Activated T-helper 2 cell treated with anti-CD3 and anti-CD28 coated beads, Interferon-gamma antibody, Interleukin-2, Interleukin-4, amounts not matched to agents 10 μg/mL and 5 μg/mL and 100 μg/mL, durations not matched to agents 14 hours and 24 hours and 36 hours (primary cell): ENCODE measurements at regions of chr12 and their contacts with region 1.

Region 1: DNA sequence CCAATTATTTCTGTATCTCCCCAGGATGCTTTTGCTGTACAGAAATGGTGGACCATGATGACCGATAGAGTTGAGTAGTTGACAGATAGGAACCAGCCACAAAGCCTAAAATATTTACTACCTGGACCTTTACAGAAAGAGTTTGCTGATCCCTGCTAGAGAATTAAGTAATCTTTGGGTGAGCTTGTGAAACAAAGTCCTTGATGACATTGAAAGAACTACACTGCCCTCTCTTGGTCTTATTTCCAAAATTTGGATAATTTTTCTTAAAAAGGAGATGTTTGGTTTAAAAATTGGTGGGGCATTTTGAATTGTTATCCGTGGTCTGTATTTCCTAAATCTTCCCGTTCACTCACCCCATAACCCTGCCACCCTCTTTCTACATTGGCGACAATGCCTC is 13.7 kb upstream of the TCTN1 start:
- DNase-seq: no peak
- H3K4me3 Mint-ChIP-seq: no peak overlapping the region
- H3K27ac Mint-ChIP-seq: no peak overlapping the region
- H3K4me1 Mint-ChIP-seq: peaks cover 11% of the 10 kb centered on the region
- H3K27me3 Mint-ChIP-seq: no peaks in the 10 kb centered on the region

Region 2: GRCh38 chr12:110449799-110450497 is 150.3 kb before region 1 on chr12 and contains the start of gene ARPC3:
- intact Hi-C with region 1: loop called (anchors 1 kb)
- DNase-seq: peak; percentile 95
- H3K4me3 Mint-ChIP-seq: peak within 1 kb of the TSS; percentile 100
- H3K27ac Mint-ChIP-seq: peak within 1 kb of the TSS; percentile 99
- H3K4me1 Mint-ChIP-seq: peaks cover 24% of the 10 kb centered on the region
- H3K27me3 Mint-ChIP-seq: no peaks in the 10 kb centered on the region
- total RNA-seq, gene ARPC3: 312 and 338 TPM in 2 replicates

Region 3: DNA sequence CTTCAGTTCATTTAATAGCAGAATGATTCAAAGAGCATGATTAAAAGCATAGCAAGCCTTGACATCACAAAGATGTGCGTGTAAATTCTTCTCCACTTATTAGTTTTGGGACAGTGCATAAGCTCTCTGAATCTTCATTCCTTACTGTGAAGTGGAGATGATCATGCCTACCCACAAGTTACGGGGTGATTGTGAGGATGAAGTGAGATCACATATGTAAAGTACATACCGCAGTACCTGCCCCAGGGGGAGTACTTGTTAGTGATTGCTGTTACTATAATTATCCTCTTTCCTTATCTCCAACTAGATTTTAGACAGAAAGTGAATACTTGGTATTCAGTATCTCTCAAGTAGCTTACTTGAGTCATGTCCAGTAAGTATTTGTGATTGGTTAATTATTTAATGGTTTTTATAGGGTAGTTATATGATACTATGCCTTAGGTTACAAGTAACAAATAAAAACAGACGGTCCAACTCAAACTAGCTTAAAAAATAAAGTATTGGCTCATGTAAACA is 92.1 kb before region 1 on chr12:
- intact Hi-C with region 1: loop called (anchors 1 kb)
- DNase-seq: no peak
- H3K4me3 Mint-ChIP-seq: no peak overlapping the region
- H3K27ac Mint-ChIP-seq: no peak overlapping the region
- H3K4me1 Mint-ChIP-seq: no peaks in the 10 kb centered on the region
- H3K27me3 Mint-ChIP-seq: peaks cover 2% of the 10 kb centered on the region

Region 4: GRCh38 chr12:110555577-110556406 is 44.5 kb before region 1 on chr12:
- intact Hi-C with region 1: loop called (anchors 1 kb)
- DNase-seq: no peak
- H3K4me3 Mint-ChIP-seq: no peak overlapping the region
- H3K27ac Mint-ChIP-seq: peak overlapping the region; percentile 14
- H3K4me1 Mint-ChIP-seq: peaks cover 31% of the 10 kb centered on the region
- H3K27me3 Mint-ChIP-seq: no peaks in the 10 kb centered on the region